ENCODE measurements at regions of chr17 and their contacts with region 1.

Region 1: GRCh38 chr17:50853015-50853615 is 13.0 kb downstream of the TOB1 start:
- DNase-seq: peak; percentile 12
- H3K4me3 Mint-ChIP-seq: no peak overlapping the region
- H3K27ac Mint-ChIP-seq: no peak overlapping the region
- H3K4me1 Mint-ChIP-seq: peaks cover 25% of the 10 kb centered on the region
- H3K27me3 Mint-ChIP-seq: peaks cover 14% of the 10 kb centered on the region

Region 2: GRCh38 chr17:50568659-50569058 is 284.5 kb before region 1 on chr17:
- CTCF ChIA-PET with region 1: no interaction called
- POLR2A ChIA-PET with region 1: no interaction called
- DNase-seq: no peak
- H3K4me3 Mint-ChIP-seq: no peak overlapping the region
- H3K27ac Mint-ChIP-seq: no peak overlapping the region
- H3K4me1 Mint-ChIP-seq: peaks cover 2% of the 10 kb centered on the region
- H3K27me3 Mint-ChIP-seq: peaks cover 39% of the 10 kb centered on the region

Region 3: DNA sequence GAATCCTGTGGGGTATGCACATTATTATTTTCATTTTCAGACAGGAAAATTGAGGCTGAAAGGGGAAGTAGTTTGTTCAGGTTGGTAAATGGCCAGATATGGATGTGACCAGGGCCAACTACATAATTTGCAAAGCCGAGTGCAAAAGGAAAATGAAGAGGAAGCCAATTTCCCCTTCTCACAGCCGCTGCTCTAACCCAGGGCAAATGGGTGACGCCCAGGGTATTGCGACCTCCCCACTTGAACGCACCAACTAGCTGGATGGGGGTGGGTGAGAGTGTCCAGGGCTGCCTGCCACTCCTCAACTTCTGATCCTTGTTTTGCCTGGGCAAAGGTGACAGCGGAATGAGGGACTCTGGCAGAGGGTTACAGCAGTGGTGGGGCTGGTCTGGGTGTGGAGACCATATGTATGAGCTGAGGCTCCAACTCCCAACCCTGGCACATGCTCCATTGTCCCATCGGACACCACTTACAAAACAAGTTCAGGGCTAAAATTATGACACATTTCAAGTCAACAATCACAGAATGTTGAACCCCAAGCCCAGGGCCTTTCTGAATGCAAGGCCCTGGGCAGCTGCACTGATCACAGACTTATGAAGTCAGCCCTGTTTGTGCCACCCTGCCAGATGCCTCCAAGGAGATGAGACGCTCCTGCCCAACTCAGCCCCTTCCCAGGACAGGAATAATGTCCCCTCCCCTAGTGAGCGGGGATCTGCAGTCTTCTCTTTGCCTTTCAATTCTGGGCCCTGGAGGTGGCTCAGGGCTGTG is 87.5 kb before region 1 on chr17:
- CTCF ChIA-PET with region 1: no interaction called
- POLR2A ChIA-PET with region 1: no interaction called
- DNase-seq: no peak
- H3K4me3 Mint-ChIP-seq: no peak overlapping the region
- H3K27ac Mint-ChIP-seq: no peak overlapping the region
- H3K4me1 Mint-ChIP-seq: peaks cover 18% of the 10 kb centered on the region
- H3K27me3 Mint-ChIP-seq: peaks cover 37% of the 10 kb centered on the region

Region 4: GRCh38 chr17:50816771-50817751 is 36.1 kb before region 1 on chr17:
- CTCF ChIA-PET with region 1: interaction called, 13 read pairs
- POLR2A ChIA-PET with region 1: no interaction called
- DNase-seq: peak; percentile 54
- H3K4me3 Mint-ChIP-seq: no peak overlapping the region
- H3K27ac Mint-ChIP-seq: no peak overlapping the region
- H3K4me1 Mint-ChIP-seq: peaks cover 27% of the 10 kb centered on the region
- H3K27me3 Mint-ChIP-seq: peaks cover 34% of the 10 kb centered on the region

Region 5: GRCh38 chr17:50931144-50931908 is 78.2 kb after region 1 on chr17:
- CTCF ChIA-PET with region 1: interaction called, 12 read pairs
- POLR2A ChIA-PET with region 1: interaction called, 5 read pairs
- DNase-seq: peak; percentile 53
- H3K4me3 Mint-ChIP-seq: peak overlapping the region; percentile 68
- H3K27ac Mint-ChIP-seq: peak overlapping the region; percentile 47
- H3K4me1 Mint-ChIP-seq: peaks cover 39% of the 10 kb centered on the region
- H3K27me3 Mint-ChIP-seq: peaks cover 23% of the 10 kb centered on the region

Region 6: GRCh38 chr17:50949989-50950881 is 97.1 kb after region 1 on chr17:
- CTCF ChIA-PET with region 1: interaction called, 189 read pairs
- POLR2A ChIA-PET with region 1: interaction called, 457 read pairs
- DNase-seq: peak; percentile 64
- H3K4me3 Mint-ChIP-seq: no peak overlapping the region
- H3K27ac Mint-ChIP-seq: peak overlapping the region; percentile 35
- H3K4me1 Mint-ChIP-seq: peaks cover 44% of the 10 kb centered on the region
- H3K27me3 Mint-ChIP-seq: no peaks in the 10 kb centered on the region

Region 7: GRCh38 chr17:50966163-50966666 is 113.1 kb after region 1 on chr17:
- CTCF ChIA-PET with region 1: interaction called, 11 read pairs
- POLR2A ChIA-PET with region 1: interaction called, 3 read pairs
- DNase-seq: no peak
- H3K4me3 Mint-ChIP-seq: no peak overlapping the region
- H3K27ac Mint-ChIP-seq: no peak overlapping the region
- H3K4me1 Mint-ChIP-seq: peaks cover 9% of the 10 kb centered on the region
- H3K27me3 Mint-ChIP-seq: no peaks in the 10 kb centered on the region

Region 8: DNA sequence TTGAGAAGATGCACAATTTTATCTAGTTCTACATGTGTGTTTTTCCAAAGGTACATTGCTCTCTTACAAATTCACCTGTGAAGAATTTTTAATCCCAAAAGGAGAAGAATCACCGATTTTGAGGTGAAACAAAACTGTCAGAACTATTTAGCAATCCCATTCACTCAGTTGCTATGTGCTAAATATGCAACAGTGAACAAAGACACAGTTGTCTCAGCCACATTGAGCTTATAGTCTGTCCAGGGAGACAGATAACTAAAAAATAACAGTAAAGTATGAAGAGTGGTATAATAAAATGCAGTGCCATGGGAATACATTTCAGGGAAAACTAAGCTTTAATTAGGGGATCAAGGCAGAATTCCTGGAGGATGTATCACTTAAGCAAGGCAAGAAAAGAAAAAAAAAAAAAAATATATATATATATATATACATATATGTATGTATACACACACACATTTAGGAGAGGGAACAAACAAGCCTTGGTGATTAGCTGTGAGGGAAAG is 157.1 kb after region 1 on chr17:
- CTCF ChIA-PET with region 1: no interaction called
- POLR2A ChIA-PET with region 1: no interaction called
- DNase-seq: no peak
- H3K4me3 Mint-ChIP-seq: no peak overlapping the region
- H3K27ac Mint-ChIP-seq: no peak overlapping the region
- H3K4me1 Mint-ChIP-seq: peaks cover 3% of the 10 kb centered on the region
- H3K27me3 Mint-ChIP-seq: no peaks in the 10 kb centered on the region

Region 9: GRCh38 chr17:51056813-51057510 is 203.8 kb after region 1 on chr17:
- CTCF ChIA-PET with region 1: interaction called, 16 read pairs
- POLR2A ChIA-PET with region 1: no interaction called
- DNase-seq: peak; percentile 20
- H3K4me3 Mint-ChIP-seq: no peak overlapping the region
- H3K27ac Mint-ChIP-seq: no peak overlapping the region
- H3K4me1 Mint-ChIP-seq: no peaks in the 10 kb centered on the region
- H3K27me3 Mint-ChIP-seq: no peaks in the 10 kb centered on the region

Measured in activated CD4-positive, alpha-beta memory T cell treated with anti-CD3 and anti-CD28 coated beads, Interleukin-2, amount 10 ng/mL, durations not matched to agents 7 days and 5 days (primary cell).